ENCODE measurements at regions of chr12 and their contacts with region 1.

Region 1: DNA sequence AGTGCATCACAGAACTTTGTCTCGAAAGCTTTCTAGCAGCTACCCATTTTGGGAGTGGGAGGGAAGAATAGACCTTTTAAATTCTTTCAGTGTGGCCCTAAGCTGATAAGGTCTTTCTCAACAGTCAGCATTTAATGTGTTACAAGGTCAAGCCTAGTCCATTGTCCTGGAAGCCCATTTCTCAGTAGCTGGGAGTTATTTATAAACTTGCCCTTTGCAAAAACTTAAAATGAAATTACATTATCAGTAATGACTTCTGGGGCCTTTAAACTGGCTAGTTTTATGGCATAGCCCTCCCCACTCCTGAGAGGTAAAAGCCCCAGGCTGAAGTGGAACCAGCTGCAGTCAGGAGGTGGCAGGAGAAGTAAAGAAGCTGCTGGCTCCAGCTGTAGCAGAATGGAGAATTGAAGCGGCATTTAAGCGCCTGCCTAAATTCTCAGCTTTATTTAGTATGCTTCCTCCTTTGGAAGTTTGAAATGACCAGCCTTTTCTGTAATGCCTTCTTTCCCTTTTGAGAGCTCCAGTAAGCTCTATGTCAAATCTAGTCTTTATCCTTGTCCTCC is 12.4 kb downstream of the COPZ1 start:
- DNase-seq: peak in 1 of 2 experiments; percentile 55
- H3K4me3 ChIP-seq: no peak overlapping the region
- H3K4me3 Mint-ChIP-seq: no peak overlapping the region
- H3K27ac Mint-ChIP-seq: no peak overlapping the region
- H3K4me1 ChIP-seq: peaks cover 38% of the 10 kb centered on the region
- H3K4me1 Mint-ChIP-seq: peaks cover 31% of the 10 kb centered on the region
- H3K27me3 ChIP-seq: no peaks in the 10 kb centered on the region
- H3K27me3 Mint-ChIP-seq: no peaks in the 10 kb centered on the region
- CTCF ChIP-seq: peak in 1 of 2 experiments; percentile 6

Region 2: GRCh38 chr12:54214553-54215406 is 122.6 kb before region 1 on chr12:
- CTCF ChIA-PET with region 1: interaction called, 10 read pairs
- POLR2A ChIA-PET with region 1: no interaction called
- intact Hi-C with region 1: no loop called
- DNase-seq: peak; percentile 89 to 92
- H3K4me3 ChIP-seq: 0 out of 2 replicates have a peak overlapping the region, but pooled peaks have one; percentile 5
- H3K4me3 Mint-ChIP-seq: peak overlapping the region; percentile 42
- H3K27ac Mint-ChIP-seq: no peak overlapping the region
- H3K4me1 ChIP-seq: no peaks in the 10 kb centered on the region
- H3K4me1 Mint-ChIP-seq: no peaks in the 10 kb centered on the region
- H3K27me3 ChIP-seq: no peaks in the 10 kb centered on the region
- H3K27me3 Mint-ChIP-seq: no peaks in the 10 kb centered on the region
- CTCF ChIP-seq: peak; percentile 97 to 98

Region 3: DNA sequence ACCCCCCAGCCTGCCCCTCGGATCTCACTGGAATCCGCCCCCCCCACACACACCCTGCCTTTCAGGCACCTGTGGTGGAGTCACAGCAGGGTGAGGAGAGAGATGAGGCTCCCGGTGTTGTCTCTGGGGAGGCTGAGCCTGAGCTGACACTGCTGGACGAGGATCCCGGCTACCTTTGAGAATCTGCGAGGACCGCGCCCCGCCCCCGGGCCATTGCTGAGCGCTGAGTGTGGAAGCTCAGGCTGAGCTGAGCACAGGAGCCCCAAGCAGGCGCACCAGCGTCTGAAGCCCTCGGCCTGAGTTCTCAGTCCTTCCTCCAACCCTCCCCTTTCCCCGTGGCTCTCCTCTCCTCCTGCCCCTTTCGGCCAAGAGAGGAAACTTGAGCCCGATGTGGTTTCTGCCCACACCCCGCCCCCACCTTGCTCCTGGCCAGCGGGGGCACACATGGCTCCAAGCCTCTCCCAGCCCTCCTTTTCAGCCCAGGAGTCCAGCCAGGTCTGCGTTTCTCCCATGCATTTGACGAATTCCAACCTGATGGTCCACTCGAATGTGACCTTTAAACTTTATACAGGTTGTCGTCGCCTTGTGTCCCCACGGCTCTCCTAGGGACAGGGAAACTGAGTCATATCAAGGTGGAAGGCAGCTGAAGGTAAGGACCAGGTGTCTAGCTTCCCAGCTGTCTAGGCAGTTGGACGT is 36.5 kb before region 1 on chr12 and contains the start of gene NFE2:
- CTCF ChIA-PET with region 1: interaction called, 11 read pairs
- POLR2A ChIA-PET with region 1: no interaction called
- intact Hi-C with region 1: loop called (anchors 5 kb)
- DNase-seq: peak; percentile 91
- H3K4me3 ChIP-seq: peak within 1 kb of the TSS; percentile 59
- H3K4me3 Mint-ChIP-seq: peak within 1 kb of the TSS; percentile 79
- H3K27ac Mint-ChIP-seq: peak within 1 kb of the TSS; percentile 60
- H3K4me1 ChIP-seq: peaks cover 35% of the 10 kb centered on the region
- H3K4me1 Mint-ChIP-seq: peaks cover 42% of the 10 kb centered on the region
- H3K27me3 ChIP-seq: no peaks in the 10 kb centered on the region
- H3K27me3 Mint-ChIP-seq: no peaks in the 10 kb centered on the region
- CTCF ChIP-seq: no peak
- total RNA-seq, gene NFE2: 5.7 and 6.2 TPM in 2 replicates

Region 4: GRCh38 chr12:54368709-54369583 is 31.6 kb after region 1 on chr12:
- CTCF ChIA-PET with region 1: interaction called, 20 read pairs
- POLR2A ChIA-PET with region 1: no interaction called
- intact Hi-C with region 1: loop called (anchors 2 kb)
- DNase-seq: peak; percentile 86 to 87
- H3K4me3 ChIP-seq: no peak overlapping the region
- H3K4me3 Mint-ChIP-seq: peak overlapping the region; percentile 23
- H3K27ac Mint-ChIP-seq: no peak overlapping the region
- H3K4me1 ChIP-seq: peaks cover 6% of the 10 kb centered on the region; the same call in 1 of the 2 replicates
- H3K4me1 Mint-ChIP-seq: no peaks in the 10 kb centered on the region
- H3K27me3 ChIP-seq: no peaks in the 10 kb centered on the region
- H3K27me3 Mint-ChIP-seq: no peaks in the 10 kb centered on the region
- CTCF ChIP-seq: peak; percentile 75 to 86